Left lung (tissue), 14 donors: ENCODE measurements at regions of chr1 and their contacts with region 1.

Region 1: GRCh38 chr1:239898062-239898730 is 193.5 kb upstream of the FMN2 start:
- DNase-seq: peak; percentile 70 to 85 (median 83)
- ATAC-seq: peak; percentile 100
- H3K4me3 ChIP-seq: no peak overlapping the region
- H3K27ac ChIP-seq: no peak overlapping the region
- H3K4me1 ChIP-seq: peaks cover 0 to 13% of the 10 kb centered on the region in 2 donors
- H3K27me3 ChIP-seq: no peaks in the 10 kb centered on the region
- CTCF ChIP-seq: peak; percentile 85 to 88

Region 2: GRCh38 chr1:239413916-239414315 is 484.3 kb before region 1 on chr1:
- intact Hi-C with region 1: loop called in 1 of 2 experiments (anchors 5 kb)
- DNase-seq: no peak
- ATAC-seq: no peak
- H3K4me3 ChIP-seq: no peak overlapping the region
- H3K27ac ChIP-seq: no peak overlapping the region
- H3K4me1 ChIP-seq: no peaks in the 10 kb centered on the region
- H3K27me3 ChIP-seq: no peaks in the 10 kb centered on the region
- CTCF ChIP-seq: no peak

Region 3: GRCh38 chr1:239778221-239778813 is 119.9 kb before region 1 on chr1:
- intact Hi-C with region 1: no loop called
- DNase-seq: peak in 1 of 4 donors; percentile 1
- ATAC-seq: no peak
- H3K4me3 ChIP-seq: no peak overlapping the region
- H3K27ac ChIP-seq: no peak overlapping the region
- H3K4me1 ChIP-seq: no peaks in the 10 kb centered on the region
- H3K27me3 ChIP-seq: no peaks in the 10 kb centered on the region
- CTCF ChIP-seq: no peak